Dendritic cell treated with granulocyte-macrophage colony-stimulating factor and Interleukin-4, amounts not matched to agents 40 ng/mL and 50 ng/mL, for 4 days (primary cell): ENCODE measurements at regions of chr19 and their contacts with region 1.

Region 1: GRCh38 chr19:52139252-52140031 is at the start of gene ZNF616:
- H3K4me3 Mint-ChIP-seq: peak within 1 kb of the TSS; percentile 93
- H3K27ac Mint-ChIP-seq: peak within 1 kb of the TSS; percentile 98
- H3K4me1 Mint-ChIP-seq: peaks cover 18% of the 10 kb centered on the region
- H3K27me3 Mint-ChIP-seq: no peaks in the 10 kb centered on the region

Region 2: DNA sequence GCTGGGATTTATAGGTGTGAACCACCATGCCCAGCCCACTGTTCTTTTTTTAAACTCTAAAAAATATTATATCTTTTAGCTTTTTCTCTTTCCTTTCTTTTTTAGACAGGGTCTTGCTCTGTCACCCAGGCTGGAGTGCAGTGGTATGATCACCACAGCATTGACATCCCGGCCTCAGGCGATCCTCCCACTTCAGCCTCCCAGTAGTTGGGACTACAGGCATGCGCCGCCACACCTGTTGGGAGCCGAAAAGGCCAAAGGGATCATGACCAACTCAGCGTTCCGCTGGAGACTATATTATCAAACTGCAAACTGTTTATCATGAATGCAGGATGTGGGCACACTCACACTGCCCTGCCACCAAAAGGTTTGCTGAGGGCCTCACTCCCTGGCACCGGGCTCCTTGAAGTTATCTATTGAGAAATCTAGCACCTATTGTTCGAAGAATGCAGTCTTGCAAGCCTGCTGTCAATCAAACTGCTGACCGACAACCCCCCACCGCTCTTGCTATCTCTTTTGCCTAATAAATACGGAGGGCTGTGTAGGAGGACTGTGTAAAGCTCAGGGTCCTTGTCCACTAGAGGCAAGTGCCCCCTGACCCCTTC is 37.0 kb after region 1 on chr19:
- intact Hi-C with region 1: no loop called
- H3K4me3 Mint-ChIP-seq: no peak overlapping the region
- H3K27ac Mint-ChIP-seq: no peak overlapping the region
- H3K4me1 Mint-ChIP-seq: peaks cover 4% of the 10 kb centered on the region
- H3K27me3 Mint-ChIP-seq: peaks cover 2% of the 10 kb centered on the region

Region 3: DNA sequence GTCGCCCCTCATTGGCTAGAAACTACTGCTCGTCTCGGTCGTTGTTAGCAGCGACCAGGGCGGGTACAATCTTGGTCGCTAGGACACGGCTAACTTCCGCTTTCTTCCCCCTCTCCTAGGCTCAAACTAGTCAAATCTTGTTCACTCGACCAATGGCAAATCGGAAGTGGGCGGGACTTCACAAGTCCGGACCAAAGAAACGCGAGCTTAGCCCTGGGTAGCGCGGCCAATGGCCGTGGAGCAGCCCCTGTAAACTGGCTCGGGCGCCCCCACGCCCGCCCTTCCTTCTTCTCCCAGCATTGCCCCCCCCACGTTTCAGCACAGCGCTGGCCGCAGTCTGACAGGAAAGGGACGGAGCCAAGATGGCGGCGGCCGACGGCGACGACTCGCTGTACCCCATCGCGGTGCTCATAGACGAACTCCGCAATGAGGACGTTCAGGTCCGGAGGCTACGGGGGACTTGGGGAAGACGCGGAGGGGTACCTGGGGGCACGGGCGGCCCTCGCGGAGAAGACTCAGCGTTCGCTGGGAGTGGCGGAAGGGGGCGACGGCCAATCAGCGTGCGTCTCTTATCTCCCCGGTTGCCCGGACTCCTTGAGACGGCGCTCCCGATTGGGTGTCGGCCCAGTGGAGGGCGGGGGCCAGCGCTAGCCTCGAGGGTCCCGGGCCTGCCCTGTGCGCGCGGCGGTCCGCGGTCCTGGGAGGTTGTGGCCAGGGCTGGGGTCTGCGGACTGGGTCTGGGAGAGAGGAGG is 50.5 kb after region 1 on chr19 and contains the start of gene PPP2R1A:
- intact Hi-C with region 1: loop called (anchors 1 kb)
- H3K4me3 Mint-ChIP-seq: peak within 1 kb of the TSS; percentile 97
- H3K27ac Mint-ChIP-seq: peak within 1 kb of the TSS; percentile 98
- H3K4me1 Mint-ChIP-seq: peaks cover 44% of the 10 kb centered on the region
- H3K27me3 Mint-ChIP-seq: no peaks in the 10 kb centered on the region

Region 4: GRCh38 chr19:52237771-52238400 is 98.4 kb after region 1 on chr19:
- intact Hi-C with region 1: loop called (anchors 2 kb)
- H3K4me3 Mint-ChIP-seq: no peak overlapping the region
- H3K27ac Mint-ChIP-seq: no peak overlapping the region
- H3K4me1 Mint-ChIP-seq: peaks cover 13% of the 10 kb centered on the region
- H3K27me3 Mint-ChIP-seq: peaks cover 1% of the 10 kb centered on the region